PC-3 (cell line): ENCODE measurements at regions of chr13 and their contacts with region 1.

Region 1: DNA sequence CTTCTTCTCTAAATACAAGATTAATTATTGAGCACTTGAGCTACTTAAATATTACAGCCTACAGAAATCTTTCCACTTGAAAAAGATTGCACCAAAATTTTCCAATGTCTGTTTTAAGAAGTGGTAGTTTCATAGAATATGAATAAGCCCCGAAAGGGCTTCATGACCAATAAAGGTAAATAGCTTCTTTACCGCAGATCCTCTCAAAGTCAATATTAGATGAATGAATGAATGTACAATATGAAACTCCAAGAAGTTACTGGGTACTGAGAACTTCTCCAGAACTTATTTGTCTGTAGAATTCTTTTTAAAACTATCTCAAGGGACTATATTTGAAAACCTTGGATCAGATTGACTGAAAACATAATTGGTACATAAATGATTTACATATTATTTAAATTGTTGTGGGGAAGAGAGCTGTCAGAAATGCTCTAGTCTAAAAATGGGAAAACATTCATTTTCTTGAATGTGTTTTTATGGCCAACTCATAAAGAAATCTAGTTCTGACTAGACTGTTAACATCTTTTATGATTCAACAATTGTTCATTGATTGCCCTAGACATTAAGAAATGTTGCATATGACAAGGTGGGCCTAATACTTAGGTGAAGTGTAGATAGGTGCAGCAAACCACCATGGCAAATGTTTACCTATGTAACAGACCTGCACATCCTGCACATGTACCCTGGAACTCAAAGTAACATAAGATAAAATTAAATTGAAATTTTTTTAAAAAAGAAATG is 227.0 kb downstream of the SPRY2 start:
- DNase-seq: peak; percentile 51
- ATAC-seq: peak; percentile 67
- H3K4me3 ChIP-seq: no peak overlapping the region
- H3K27ac ChIP-seq: peak overlapping the region; percentile 73
- H3K4me1 ChIP-seq: peaks cover 20% of the 10 kb centered on the region; the same call in 1 of the 2 replicates
- H3K27me3 ChIP-seq: no peaks in the 10 kb centered on the region
- CTCF ChIP-seq: no peak

Region 2: GRCh38 chr13:80096383-80096782 is 17.5 kb before region 1 on chr13:
- CTCF ChIA-PET with region 1: no interaction called
- POLR2A ChIA-PET with region 1: interaction called, 13 read pairs
- intact Hi-C with region 1: no loop called
- DNase-seq: no peak
- ATAC-seq: no peak
- H3K4me3 ChIP-seq: no peak overlapping the region
- H3K27ac ChIP-seq: no peak overlapping the region
- H3K4me1 ChIP-seq: no peaks in the 10 kb centered on the region
- H3K27me3 ChIP-seq: no peaks in the 10 kb centered on the region
- CTCF ChIP-seq: no peak

Region 3: GRCh38 chr13:80716610-80717081 is 602.8 kb after region 1 on chr13:
- CTCF ChIA-PET with region 1: no interaction called
- POLR2A ChIA-PET with region 1: no interaction called
- intact Hi-C with region 1: no loop called
- DNase-seq: no peak
- ATAC-seq: no peak
- H3K4me3 ChIP-seq: no peak overlapping the region
- H3K27ac ChIP-seq: no peak overlapping the region
- H3K4me1 ChIP-seq: no peaks in the 10 kb centered on the region
- H3K27me3 ChIP-seq: no peaks in the 10 kb centered on the region
- CTCF ChIP-seq: no peak